T-cell (primary cell): ENCODE measurements at regions of chr20 and their contacts with region 1.

Region 1: DNA sequence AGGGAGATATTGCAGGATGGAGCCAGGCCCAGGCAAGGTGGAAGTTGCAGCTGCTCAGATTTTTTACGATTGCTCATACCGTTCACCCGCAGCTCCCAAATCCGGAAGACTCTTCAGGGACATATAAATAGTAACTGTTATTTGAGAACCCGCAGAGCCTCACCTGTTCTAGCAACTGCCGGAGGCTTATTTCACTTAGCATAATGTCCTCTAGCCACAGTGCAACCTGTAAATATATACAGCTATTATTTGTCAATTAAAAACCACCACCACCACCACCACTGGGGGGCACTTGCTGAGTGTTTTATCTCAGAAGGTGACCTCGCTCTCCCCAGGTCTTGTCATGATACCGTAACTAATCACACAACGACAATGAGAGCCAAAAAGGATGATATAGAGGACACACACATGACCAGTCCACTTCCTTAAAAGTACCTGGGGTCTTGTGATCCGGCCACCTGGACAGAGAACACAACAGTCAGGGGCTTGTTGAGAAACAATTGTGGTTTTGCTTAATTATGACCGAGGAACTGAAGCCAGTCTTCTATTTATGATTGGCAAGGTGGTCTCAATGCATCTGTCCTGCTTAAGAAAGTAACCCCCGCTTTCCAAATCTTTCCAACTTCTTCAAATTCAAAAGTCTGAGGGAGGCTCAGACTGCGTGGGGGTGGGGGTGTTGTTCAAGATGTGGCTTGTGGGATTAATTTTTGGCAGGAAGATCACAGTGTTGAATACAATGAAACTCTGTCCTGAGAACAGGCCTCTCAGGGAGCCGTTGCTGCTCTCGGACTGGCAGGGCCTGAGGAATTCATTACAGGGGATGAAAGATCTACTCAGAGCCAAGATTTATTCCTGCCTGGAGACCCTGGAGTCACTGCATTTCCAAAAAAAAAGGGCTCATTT is 107.7 kb upstream of the PRND start:
- DNase-seq: peak; percentile 20 to 70 (median 55)
- ATAC-seq: peak in 3 of 4 experiments; percentile 58 to 72 (median 65)
- H3K4me3 ChIP-seq: no peak overlapping the region
- H3K4me3 Mint-ChIP-seq: no peak overlapping the region
- H3K27ac ChIP-seq: no peak overlapping the region
- H3K27ac Mint-ChIP-seq: no peak overlapping the region
- H3K4me1 ChIP-seq: no peaks in the 10 kb centered on the region
- H3K4me1 Mint-ChIP-seq: peaks cover 5 to 11% (median 5%) of the 10 kb centered on the region in 3 donors
- H3K27me3 ChIP-seq: peaks cover 0 to 5% of the 10 kb centered on the region in 2 experiments
- H3K27me3 Mint-ChIP-seq: peaks cover 0 to 11% of the 10 kb centered on the region in 2 donors

Region 2: GRCh38 chr20:4626228-4626627 is 12.3 kb after region 1 on chr20:
- CTCF ChIA-PET with region 1: no interaction called
- POLR2A ChIA-PET with region 1: no interaction called
- DNase-seq: no peak
- ATAC-seq: no peak
- H3K4me3 ChIP-seq: no peak overlapping the region
- H3K4me3 Mint-ChIP-seq: no peak overlapping the region
- H3K27ac ChIP-seq: no peak overlapping the region
- H3K27ac Mint-ChIP-seq: no peak overlapping the region
- H3K4me1 ChIP-seq: no peaks in the 10 kb centered on the region
- H3K4me1 Mint-ChIP-seq: no peaks in the 10 kb centered on the region
- H3K27me3 ChIP-seq: peaks cover 0 to 10% of the 10 kb centered on the region in 2 experiments
- H3K27me3 Mint-ChIP-seq: peaks cover 19 to 25% of the 10 kb centered on the region in 2 donors

Region 3: DNA sequence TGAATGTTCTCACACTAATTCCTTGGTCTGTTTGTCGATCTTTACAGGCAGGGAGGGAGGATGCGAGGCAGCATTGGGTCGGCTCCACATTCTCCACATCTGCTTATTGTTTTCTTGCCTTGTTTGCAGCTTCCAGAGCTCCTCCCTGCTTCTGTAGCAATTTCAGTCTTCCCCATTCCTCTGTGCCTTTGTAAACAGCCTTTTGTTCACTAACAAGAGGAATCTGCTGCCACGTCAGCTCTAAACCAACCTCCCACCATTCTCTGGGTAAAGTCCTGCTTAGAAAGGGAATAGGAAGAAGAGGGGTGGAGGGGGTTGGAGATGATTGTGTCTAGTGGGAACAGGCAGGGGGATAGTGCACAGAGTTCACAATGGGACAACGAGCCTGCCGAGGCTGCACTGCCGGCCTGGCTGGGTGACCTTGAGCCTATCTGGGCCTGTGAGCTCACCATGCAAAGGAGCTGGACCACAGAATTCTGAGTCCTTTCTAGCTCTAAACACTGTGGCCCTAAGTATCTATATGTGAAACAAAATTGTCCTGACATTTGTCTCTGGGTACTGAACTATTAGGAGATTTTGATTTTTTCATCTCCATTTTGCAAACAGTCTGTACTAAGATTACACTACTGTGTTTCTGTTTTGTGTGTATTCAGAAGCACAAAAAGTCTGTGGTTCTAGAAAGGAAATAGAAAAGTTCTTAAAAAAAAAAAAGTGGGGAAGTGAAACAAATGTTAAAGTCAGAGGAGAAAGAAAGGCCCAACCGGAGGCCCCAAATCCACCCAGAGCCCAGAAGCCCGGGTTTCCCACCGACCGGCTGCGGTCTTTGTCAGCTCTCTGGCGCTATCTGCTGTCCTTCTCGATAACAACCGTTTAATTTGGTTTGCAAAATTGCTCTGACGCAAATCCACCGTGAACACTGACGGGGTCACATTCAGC is 106.3 kb after region 1 on chr20:
- CTCF ChIA-PET with region 1: interaction called, 6 to 31 read pairs
- POLR2A ChIA-PET with region 1: no interaction called
- DNase-seq: peak; percentile 49 to 85 (median 73)
- ATAC-seq: peak; percentile 78 to 94 (median 82)
- H3K4me3 ChIP-seq: no peak overlapping the region
- H3K4me3 Mint-ChIP-seq: no peak overlapping the region
- H3K27ac ChIP-seq: no peak overlapping the region
- H3K27ac Mint-ChIP-seq: no peak overlapping the region
- H3K4me1 ChIP-seq: peaks cover 0 to 10% of the 10 kb centered on the region in 2 experiments
- H3K4me1 Mint-ChIP-seq: peaks cover 9 to 11% (median 10%) of the 10 kb centered on the region in 3 donors
- H3K27me3 ChIP-seq: peaks cover 0 to 9% of the 10 kb centered on the region in 2 experiments
- H3K27me3 Mint-ChIP-seq: no peaks in the 10 kb centered on the region

Region 4: DNA sequence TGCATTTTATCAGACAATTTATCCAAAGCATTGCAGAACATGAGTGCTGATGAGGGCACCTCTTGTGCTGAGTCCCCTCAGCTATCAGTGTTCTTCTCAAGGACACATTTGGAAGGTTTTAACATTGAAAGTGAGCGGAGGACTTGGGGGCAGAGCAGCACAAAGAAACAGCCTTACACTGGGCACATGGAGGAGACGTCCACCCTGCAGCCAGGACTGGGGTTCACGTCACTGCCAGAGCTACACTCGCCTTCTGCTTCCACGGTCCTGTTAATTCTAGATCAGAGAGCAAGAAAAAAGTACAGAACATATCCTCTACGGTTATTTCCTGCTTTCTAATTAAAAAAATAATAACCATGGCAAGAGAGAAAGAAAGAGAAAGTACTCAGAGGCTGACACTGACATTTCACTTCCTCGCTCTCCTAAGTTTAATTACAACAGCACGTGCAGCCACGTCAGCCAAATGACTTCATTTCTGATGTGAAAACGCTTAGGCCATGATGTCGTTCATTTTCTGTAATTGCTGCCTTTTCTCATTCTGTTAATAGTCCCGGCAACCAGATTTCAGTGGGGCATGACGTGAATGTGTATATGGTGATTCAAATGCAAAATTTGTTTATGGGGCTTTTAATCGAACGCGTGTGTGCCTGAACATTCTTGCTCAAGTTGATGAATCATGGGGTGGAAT is 112.9 kb after region 1 on chr20:
- CTCF ChIA-PET with region 1: interaction called in 1 of 2 experiments, 14 read pairs
- POLR2A ChIA-PET with region 1: no interaction called
- DNase-seq: peak in 31 of 35 experiments; percentile 11 to 63 (median 39)
- ATAC-seq: peak; percentile 65 to 93 (median 73)
- H3K4me3 ChIP-seq: no peak overlapping the region
- H3K4me3 Mint-ChIP-seq: peak overlapping the region; percentile 58 to 62 (median 61)
- H3K27ac ChIP-seq: peak overlapping the region; percentile 53
- H3K27ac Mint-ChIP-seq: peak overlapping the region; percentile 76 to 85
- H3K4me1 ChIP-seq: peaks cover 0 to 9% of the 10 kb centered on the region in 2 experiments
- H3K4me1 Mint-ChIP-seq: peaks cover 11 to 18% (median 17%) of the 10 kb centered on the region in 3 donors
- H3K27me3 ChIP-seq: peaks cover 0 to 19% of the 10 kb centered on the region in 2 experiments
- H3K27me3 Mint-ChIP-seq: peaks cover 0 to 2% of the 10 kb centered on the region in 2 donors